ENCODE measurements at regions of chr3 and their contacts with region 1.

Region 1: DNA sequence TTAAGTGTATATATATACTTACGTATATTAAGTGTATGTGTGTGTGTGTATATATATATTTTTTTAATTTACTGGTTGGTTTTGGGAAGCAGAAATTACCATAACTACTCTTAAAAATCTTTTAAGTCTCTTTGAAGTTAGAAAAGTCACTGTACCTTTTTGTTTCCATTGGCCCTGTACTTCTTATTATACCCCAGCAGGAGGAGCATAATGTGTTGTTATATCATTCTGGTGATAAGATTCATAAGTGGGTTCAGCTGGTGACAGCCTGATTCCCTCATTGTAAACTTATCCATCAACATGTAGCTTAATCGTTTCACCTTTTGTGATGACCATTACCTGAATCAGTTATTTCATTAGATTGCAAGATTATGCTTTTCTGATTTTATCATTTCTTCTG is 30.8 kb downstream of the MLH1 start:
- DNase-seq: peak in 3 of 4 experiments; percentile 22 to 63 (median 54)
- ATAC-seq: peak; percentile 51; the same call in 2 of the 3 replicates
- H3K4me3 ChIP-seq: no peak overlapping the region
- H3K27ac ChIP-seq: no peak overlapping the region
- H3K4me1 ChIP-seq: peaks cover 4 to 8% of the 10 kb centered on the region in 2 experiments; a peak in 3 of 5 replicates
- H3K27me3 ChIP-seq: no peaks in the 10 kb centered on the region
- CTCF ChIP-seq: peak; percentile 34 to 52 (median 47); a peak in 5 of 6 replicates
- EP300 ChIP-seq: no peak
- POLR2A ChIP-seq: no peak
- RAD21 ChIP-seq: peak in 1 of 2 experiments; percentile 61; a peak in 2 of 4 replicates

Region 2: DNA sequence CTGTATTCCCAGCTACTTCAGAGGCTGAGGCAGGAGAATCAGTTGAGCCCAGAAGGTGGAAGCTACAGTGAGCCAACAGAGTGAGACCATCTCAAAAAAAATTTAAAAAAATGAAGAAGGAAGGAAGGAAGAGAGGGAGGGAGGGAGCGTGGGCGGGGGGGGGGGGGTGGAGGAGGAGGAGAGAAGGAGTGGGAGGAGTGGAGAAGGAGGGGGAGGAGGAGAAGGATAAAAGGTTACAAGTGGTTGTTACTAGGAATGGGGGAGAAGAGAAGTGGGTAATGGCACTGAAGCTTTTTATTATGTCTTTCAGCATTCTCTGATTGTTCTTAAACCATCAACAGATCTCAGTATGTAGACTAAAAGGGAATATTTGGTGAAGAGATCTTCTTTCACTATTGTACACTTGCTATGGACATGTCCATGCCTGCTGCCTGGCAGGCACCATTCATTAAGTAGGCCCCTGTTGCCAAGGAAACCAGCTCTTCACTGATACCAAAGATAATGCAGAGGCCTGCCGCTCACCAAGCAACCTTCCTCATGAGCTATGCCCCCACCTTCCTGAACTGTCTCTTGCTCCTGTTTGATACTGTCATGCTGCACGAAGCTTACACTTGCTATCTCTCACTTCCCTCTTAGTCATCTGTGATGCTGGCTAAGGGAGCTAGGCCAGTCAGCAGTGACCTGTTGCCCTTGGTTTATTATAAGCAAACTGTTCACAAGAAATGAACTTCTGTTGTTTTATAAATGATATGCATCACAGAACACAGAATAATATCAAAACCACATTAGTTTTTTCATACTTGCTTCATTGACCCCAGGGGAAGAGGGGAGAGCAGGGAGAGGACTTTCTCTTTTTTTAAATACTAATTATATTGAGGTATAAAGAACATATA is 54.3 kb before region 1 on chr3:
- CTCF ChIA-PET with region 1: no interaction called
- POLR2A ChIA-PET with region 1: no interaction called
- in situ Hi-C with region 1: no loop called
- intact Hi-C with region 1: no loop called
- DNase-seq: peak; percentile 88 to 99 (median 92)
- ATAC-seq: peak; percentile 98
- H3K4me3 ChIP-seq: no peak overlapping the region
- H3K27ac ChIP-seq: peak overlapping the region; percentile 79
- H3K4me1 ChIP-seq: peaks cover 31 to 44% of the 10 kb centered on the region in 2 experiments
- H3K27me3 ChIP-seq: no peaks in the 10 kb centered on the region
- CTCF ChIP-seq: no peak
- EP300 ChIP-seq: peak; percentile 84
- POLR2A ChIP-seq: 0 out of 2 replicates have a peak, but pooled peaks have one; percentile 43
- RAD21 ChIP-seq: peak in 1 of 2 experiments; percentile 27; a peak in 1 of 4 replicates

Region 3: DNA sequence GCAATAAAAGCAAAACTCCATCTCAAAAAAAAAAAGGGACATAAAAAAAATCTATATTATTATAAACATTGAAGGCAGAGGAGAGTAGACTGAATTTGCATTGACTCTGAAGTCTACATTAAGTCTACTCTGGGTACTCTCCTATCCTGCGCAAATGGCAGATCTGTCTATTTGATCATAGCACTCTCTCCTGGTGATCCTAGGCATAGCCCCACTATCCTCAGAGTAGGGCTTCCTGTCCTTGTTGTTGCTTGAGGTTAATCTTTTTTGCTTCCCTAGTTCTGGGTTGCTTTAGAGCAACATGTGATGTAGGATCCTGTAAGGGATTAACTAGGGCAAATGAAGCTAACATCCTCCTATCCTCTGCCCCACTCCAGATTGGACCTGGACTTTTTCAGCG is 232.4 kb after region 1 on chr3:
- CTCF ChIA-PET with region 1: no interaction called
- POLR2A ChIA-PET with region 1: no interaction called
- in situ Hi-C with region 1: no loop called
- intact Hi-C with region 1: loop called (anchors 1 kb)
- DNase-seq: peak in 2 of 4 experiments; percentile 45 to 46
- ATAC-seq: peak; percentile 91
- H3K4me3 ChIP-seq: no peak overlapping the region
- H3K27ac ChIP-seq: no peak overlapping the region
- H3K4me1 ChIP-seq: no peaks in the 10 kb centered on the region
- H3K27me3 ChIP-seq: no peaks in the 10 kb centered on the region
- CTCF ChIP-seq: peak; percentile 43 to 55 (median 52); a peak in 5 of 6 replicates
- EP300 ChIP-seq: no peak
- POLR2A ChIP-seq: no peak
- RAD21 ChIP-seq: peak in 1 of 2 experiments; percentile 62; a peak in 2 of 4 replicates

Measured in K562 (cell line).